Common myeloid progenitor, CD34-positive (primary cell): ENCODE measurements at regions of chr3 and their contacts with region 1.

Region 1: GRCh38 chr3:85576091-85576690 is 617.4 kb downstream of the CADM2 start:
- DNase-seq: peak; percentile 47 to 77 (median 73)
- H3K4me3 ChIP-seq: no peak overlapping the region
- H3K27ac ChIP-seq: no peak overlapping the region
- H3K4me1 ChIP-seq: no peaks in the 10 kb centered on the region
- H3K27me3 ChIP-seq: no peaks in the 10 kb centered on the region

Region 2: GRCh38 chr3:84547971-84548970 is 1027.9 kb before region 1 on chr3:
- CTCF ChIA-PET with region 1: interaction called, 15 read pairs
- POLR2A ChIA-PET with region 1: no interaction called
- DNase-seq: peak; percentile 25 to 52 (median 48)
- H3K4me3 ChIP-seq: no peak overlapping the region
- H3K27ac ChIP-seq: no peak overlapping the region
- H3K4me1 ChIP-seq: no peaks in the 10 kb centered on the region
- H3K27me3 ChIP-seq: no peaks in the 10 kb centered on the region